Mammary epithelial cell (primary cell): ENCODE measurements at regions of chr4 and their contacts with region 1.

Region 1: GRCh38 chr4:122914292-122914904 is 8.0 kb downstream of the NUDT6 start:
- DNase-seq: peak; percentile 39
- H3K4me3 ChIP-seq: no peak overlapping the region
- H3K27ac ChIP-seq: no peak overlapping the region
- H3K4me1 ChIP-seq: peaks cover 11% of the 10 kb centered on the region
- H3K27me3 ChIP-seq: no peaks in the 10 kb centered on the region
- CTCF ChIP-seq: peak; percentile 30 to 50

Region 2: GRCh38 chr4:122732329-122733026 is 181.9 kb before region 1 on chr4 and contains the start of gene BBS12:
- CTCF ChIA-PET with region 1: interaction called, 6 read pairs
- dilution Hi-C with region 1: no loop called
- in situ Hi-C with region 1: no loop called
- intact Hi-C with region 1: loop called (anchors 2 kb)
- DNase-seq: peak; percentile 99
- H3K4me3 ChIP-seq: peak within 1 kb of the TSS; percentile 58 to 76 (median 70)
- H3K27ac ChIP-seq: peak within 1 kb of the TSS; percentile 92
- H3K4me1 ChIP-seq: peaks cover 7% of the 10 kb centered on the region
- H3K27me3 ChIP-seq: no peaks in the 10 kb centered on the region
- CTCF ChIP-seq: peak in 1 of 2 donors; percentile 62
- total RNA-seq, gene BBS12: 4.3 to 13.0 TPM

Region 3: GRCh38 chr4:122898370-122899150 is 15.8 kb before region 1 on chr4:
- CTCF ChIA-PET with region 1: no interaction called
- dilution Hi-C with region 1: no loop called
- in situ Hi-C with region 1: no loop called
- intact Hi-C with region 1: no loop called
- DNase-seq: peak; percentile 85
- H3K4me3 ChIP-seq: no peak overlapping the region
- H3K27ac ChIP-seq: peak overlapping the region; percentile 57
- H3K4me1 ChIP-seq: peaks cover 8% of the 10 kb centered on the region
- H3K27me3 ChIP-seq: no peaks in the 10 kb centered on the region
- CTCF ChIP-seq: no peak

Region 4: DNA sequence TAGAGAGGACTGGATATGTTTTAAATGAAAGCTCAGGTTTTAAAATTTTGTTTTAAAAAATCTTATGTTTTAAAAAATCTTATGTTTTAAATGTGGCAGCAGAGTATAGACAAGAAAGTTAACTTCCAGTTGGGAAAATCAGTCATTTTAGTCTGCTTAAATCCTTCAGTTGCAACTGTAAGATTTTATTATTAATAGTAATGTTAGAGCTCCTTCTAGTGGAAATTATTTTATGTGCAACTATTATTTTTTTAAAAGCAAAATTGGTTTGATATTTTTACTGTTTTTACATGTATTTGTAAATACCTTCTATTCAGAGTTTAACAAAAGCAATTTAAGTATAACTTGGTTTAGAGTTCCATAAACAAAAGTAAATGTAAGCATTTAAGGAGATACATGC is 16.5 kb after region 1 on chr4:
- CTCF ChIA-PET with region 1: interaction called, 12 read pairs
- dilution Hi-C with region 1: no loop called
- in situ Hi-C with region 1: no loop called
- intact Hi-C with region 1: no loop called
- DNase-seq: no peak
- H3K4me3 ChIP-seq: no peak overlapping the region
- H3K27ac ChIP-seq: no peak overlapping the region
- H3K4me1 ChIP-seq: no peaks in the 10 kb centered on the region
- H3K27me3 ChIP-seq: no peaks in the 10 kb centered on the region
- CTCF ChIP-seq: peak; percentile 43 to 49

Region 5: GRCh38 chr4:123832173-123833026 is 918.0 kb after region 1 on chr4:
- CTCF ChIA-PET with region 1: no interaction called
- dilution Hi-C with region 1: no loop called
- in situ Hi-C with region 1: no loop called
- intact Hi-C with region 1: no loop called
- DNase-seq: peak; percentile 94
- H3K4me3 ChIP-seq: peak overlapping the region in 1 of 3 experiments; percentile 4
- H3K27ac ChIP-seq: peak overlapping the region; percentile 79
- H3K4me1 ChIP-seq: peaks cover 33% of the 10 kb centered on the region
- H3K27me3 ChIP-seq: no peaks in the 10 kb centered on the region
- CTCF ChIP-seq: no peak